OCI-LY7 (cell line): ENCODE measurements at regions of chr1 and their contacts with region 1.

Region 1: GRCh38 chr1:204506961-204507387 is 9.2 kb upstream of the MDM4 start:
- DNase-seq: peak; percentile 93
- H3K4me3 ChIP-seq: peak overlapping the region; percentile 72
- H3K27ac ChIP-seq: peak overlapping the region; percentile 96
- H3K4me1 ChIP-seq: peaks cover 66% of the 10 kb centered on the region
- CTCF ChIP-seq: no peak

Region 2: DNA sequence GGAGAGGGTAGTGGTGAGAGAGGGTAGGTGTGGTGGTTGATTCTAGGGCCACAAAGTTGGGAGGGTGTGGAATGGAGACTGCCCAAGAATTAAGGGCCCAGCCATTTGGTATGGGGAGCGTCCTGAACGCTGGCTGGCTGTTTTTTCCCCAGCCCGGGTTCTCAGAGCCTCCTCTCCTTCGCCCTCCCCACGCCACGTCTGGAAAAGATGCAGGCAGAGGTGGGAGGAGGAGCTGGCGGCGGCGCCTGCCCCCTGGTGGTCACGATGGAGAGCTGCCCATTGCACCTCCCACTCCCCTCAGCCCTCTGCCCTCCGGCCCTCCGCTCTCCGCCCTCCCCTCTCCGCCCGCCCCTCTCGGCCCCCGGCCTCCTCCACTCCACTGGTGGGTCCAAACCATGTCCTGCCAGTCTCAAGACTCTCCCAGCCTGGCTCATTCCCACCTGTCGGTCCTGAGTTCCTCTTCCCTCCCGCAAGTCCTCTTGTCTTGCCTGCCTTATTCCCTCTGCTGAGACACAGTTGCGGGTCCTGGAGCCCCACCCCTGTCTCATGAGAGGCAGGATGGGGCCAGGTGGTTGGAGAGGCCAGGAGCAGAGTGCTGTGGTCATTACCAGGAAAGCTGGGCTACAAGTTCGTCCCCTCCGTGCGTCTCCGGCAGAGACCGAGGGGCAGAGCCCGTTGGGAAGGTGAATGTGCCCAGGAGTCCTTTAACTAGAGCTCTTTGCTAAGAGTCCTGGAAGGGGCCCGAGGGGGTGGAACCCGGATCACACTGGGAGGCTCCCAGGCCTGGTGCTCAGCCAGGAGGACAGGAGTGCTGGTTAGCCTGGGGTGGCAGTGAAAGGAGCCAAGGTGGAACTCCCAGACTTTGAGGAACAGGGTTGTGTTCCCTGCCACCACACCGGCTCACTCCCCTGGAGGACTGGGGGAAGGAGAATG is 377.7 kb before region 1 on chr1:
- CTCF ChIA-PET with region 1: no interaction called
- POLR2A ChIA-PET with region 1: no interaction called
- intact Hi-C with region 1: no loop called
- DNase-seq: peak; percentile 70
- H3K4me3 ChIP-seq: no peak overlapping the region
- H3K27ac ChIP-seq: no peak overlapping the region
- H3K4me1 ChIP-seq: peaks cover 4% of the 10 kb centered on the region
- CTCF ChIP-seq: peak; percentile 88

Region 3: DNA sequence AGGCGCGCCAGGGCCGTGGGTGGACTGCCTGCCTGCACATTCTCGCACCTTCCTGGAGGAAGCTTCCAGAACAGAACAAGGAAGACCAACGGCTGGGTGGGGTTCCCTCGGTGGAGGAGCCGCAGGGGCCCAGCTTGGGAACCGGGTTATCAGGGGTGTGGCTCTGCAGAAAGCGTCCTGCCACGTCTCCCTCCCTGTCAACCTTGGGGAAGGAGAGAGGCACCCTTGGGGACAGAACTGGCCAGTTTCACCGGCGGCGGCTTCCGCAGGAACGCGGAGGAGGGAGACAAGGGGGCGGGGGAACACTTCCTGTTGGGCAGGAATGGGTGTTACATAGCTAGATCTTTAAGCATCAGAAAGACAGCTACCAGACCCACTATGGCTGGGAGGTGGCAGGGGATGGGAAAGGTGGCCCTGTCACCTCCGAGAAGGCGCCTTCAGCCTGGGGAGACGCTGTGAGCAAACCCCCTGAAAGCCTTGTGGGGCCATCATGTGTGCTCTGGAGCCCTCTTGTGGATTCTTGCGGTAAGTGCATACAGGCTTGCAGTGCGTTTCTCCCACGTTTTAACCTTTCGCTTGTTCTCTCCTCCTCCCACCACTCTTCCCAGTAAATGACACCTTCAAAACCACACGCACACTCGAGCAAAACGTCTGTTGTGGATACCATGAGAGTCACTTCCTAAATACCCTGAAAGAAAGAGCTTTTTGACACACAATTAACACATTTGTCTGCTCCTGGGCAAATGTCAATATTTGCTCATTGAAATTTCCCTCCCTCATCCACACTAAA is 143.4 kb before region 1 on chr1:
- CTCF ChIA-PET with region 1: no interaction called
- POLR2A ChIA-PET with region 1: no interaction called
- intact Hi-C with region 1: loop called (anchors 1 kb)
- DNase-seq: peak; percentile 78
- H3K4me3 ChIP-seq: peak overlapping the region; percentile 41
- H3K27ac ChIP-seq: no peak overlapping the region
- H3K4me1 ChIP-seq: peaks cover 5% of the 10 kb centered on the region
- CTCF ChIP-seq: peak; percentile 92

Region 4: GRCh38 chr1:204431310-204432165 is 75.4 kb before region 1 on chr1:
- CTCF ChIA-PET with region 1: interaction called, 6 read pairs
- POLR2A ChIA-PET with region 1: interaction called, 4 read pairs
- intact Hi-C with region 1: loop called (anchors 1 kb)
- DNase-seq: peak; percentile 82
- H3K4me3 ChIP-seq: no peak overlapping the region
- H3K27ac ChIP-seq: no peak overlapping the region
- H3K4me1 ChIP-seq: no peaks in the 10 kb centered on the region
- CTCF ChIP-seq: peak; percentile 97

Region 5: GRCh38 chr1:204480515-204480914 is 26.5 kb before region 1 on chr1:
- CTCF ChIA-PET with region 1: interaction called, 7 read pairs
- POLR2A ChIA-PET with region 1: interaction called, 11 read pairs
- intact Hi-C with region 1: loop called (anchors 2 kb)
- DNase-seq: peak; percentile 84
- H3K4me3 ChIP-seq: peak overlapping the region; percentile 31
- H3K27ac ChIP-seq: peak overlapping the region; percentile 87
- H3K4me1 ChIP-seq: peaks cover 52% of the 10 kb centered on the region
- CTCF ChIP-seq: peak; percentile 65

Region 6: GRCh38 chr1:204523605-204524215 is 16.7 kb after region 1 on chr1:
- CTCF ChIA-PET with region 1: interaction called, 3 read pairs
- POLR2A ChIA-PET with region 1: interaction called, 28 read pairs
- intact Hi-C with region 1: loop called (anchors 2 kb)
- DNase-seq: peak; percentile 64
- H3K4me3 ChIP-seq: peak overlapping the region; percentile 28
- H3K27ac ChIP-seq: peak overlapping the region; percentile 71
- H3K4me1 ChIP-seq: peaks cover 95% of the 10 kb centered on the region
- CTCF ChIP-seq: no peak

Region 7: DNA sequence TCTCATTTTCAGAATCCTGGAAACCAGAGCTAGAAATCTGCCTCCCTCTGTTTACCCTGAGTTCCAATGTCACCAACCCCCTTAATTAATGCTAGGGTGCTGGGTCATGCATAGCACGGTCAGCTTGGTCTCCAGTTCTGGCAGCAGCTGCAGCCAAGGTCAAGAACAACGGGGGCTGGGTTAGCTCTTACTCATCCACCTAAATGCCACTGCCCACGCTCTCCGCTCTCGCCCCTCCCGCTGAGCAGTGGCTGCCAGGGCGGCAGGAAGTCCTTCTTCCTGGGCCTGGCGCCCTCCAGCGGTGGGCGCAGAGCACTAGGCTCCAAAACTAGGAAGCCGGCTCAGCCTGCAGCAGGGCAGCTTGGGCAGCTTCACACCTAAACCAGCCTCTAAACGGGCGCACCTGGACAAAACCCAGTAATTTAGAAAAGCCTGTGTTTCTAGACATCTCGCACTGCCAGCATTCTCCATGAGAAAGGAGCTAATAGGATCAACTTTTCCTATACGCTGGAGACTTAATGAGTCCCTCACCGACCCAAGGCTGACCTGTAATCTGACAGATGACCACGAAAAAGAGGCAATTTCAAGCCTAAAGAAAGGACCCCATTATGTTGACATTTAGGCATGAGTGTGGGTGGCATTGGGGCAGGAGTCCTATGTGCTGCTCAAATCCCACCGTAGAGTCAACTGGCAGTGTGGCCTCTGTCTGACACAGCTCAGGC is 256.9 kb after region 1 on chr1:
- CTCF ChIA-PET with region 1: interaction called, 3 read pairs
- POLR2A ChIA-PET with region 1: no interaction called
- intact Hi-C with region 1: loop called (anchors 5 kb)
- DNase-seq: peak; percentile 83
- H3K4me3 ChIP-seq: no peak overlapping the region
- H3K27ac ChIP-seq: no peak overlapping the region
- H3K4me1 ChIP-seq: peaks cover 5% of the 10 kb centered on the region
- CTCF ChIP-seq: peak; percentile 86